Panc1 (cell line): ENCODE measurements at regions of chr2 and their contacts with region 1.

Region 1: DNA sequence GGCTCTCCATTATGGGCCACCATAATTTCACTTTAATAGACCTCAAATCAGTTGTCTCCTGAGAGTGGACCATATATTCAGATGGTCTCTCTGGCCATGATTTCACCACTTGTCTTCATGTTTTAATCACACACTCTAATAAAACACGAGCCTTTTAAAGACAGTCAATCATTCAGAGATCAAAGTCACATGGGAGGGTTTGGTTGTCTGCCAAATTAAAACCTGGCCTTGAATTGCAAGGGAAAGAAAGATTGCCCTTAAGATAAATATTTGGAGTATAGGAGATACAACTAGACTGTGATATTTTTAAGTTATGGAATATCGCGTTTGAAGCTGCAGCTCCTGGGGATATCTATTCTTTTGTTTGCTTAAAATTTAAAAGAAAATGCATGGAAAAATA is 377.8 kb upstream of the DDX18 start:
- DNase-seq: no peak
- ATAC-seq: no peak
- H3K4me3 ChIP-seq: no peak overlapping the region
- H3K27ac ChIP-seq: no peak overlapping the region
- H3K4me1 ChIP-seq: no peaks in the 10 kb centered on the region
- H3K27me3 ChIP-seq: no peaks in the 10 kb centered on the region
- CTCF ChIP-seq: no peak

Region 2: DNA sequence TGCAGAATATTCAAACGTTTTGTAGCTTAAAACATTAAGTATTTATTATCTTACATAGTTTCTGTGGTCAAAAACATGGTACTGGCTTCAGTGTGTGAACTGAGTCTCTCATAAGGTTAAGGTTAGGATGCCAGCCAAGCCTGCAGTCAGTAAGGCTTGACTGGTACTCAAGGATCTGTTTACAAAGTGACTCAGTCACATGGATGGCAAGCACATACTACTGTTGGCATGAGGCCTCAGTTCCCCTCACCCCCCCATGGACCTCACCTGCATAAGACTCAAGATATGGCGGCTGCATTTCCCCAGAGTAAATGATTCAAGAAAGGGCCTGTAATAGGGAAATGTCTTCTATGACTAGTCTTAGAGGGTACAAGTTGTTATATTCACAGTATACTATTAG is 1826.7 kb before region 1 on chr2:
- CTCF ChIA-PET with region 1: interaction called, 12 read pairs
- POLR2A ChIA-PET with region 1: no interaction called
- in situ Hi-C with region 1: no loop called
- intact Hi-C with region 1: no loop called
- DNase-seq: no peak
- ATAC-seq: no peak
- H3K4me3 ChIP-seq: no peak overlapping the region
- H3K27ac ChIP-seq: no peak overlapping the region
- H3K4me1 ChIP-seq: no peaks in the 10 kb centered on the region
- H3K27me3 ChIP-seq: no peaks in the 10 kb centered on the region
- CTCF ChIP-seq: no peak

Region 3: GRCh38 chr2:117118994-117119393 is 317.7 kb before region 1 on chr2:
- CTCF ChIA-PET with region 1: no interaction called
- POLR2A ChIA-PET with region 1: no interaction called
- in situ Hi-C with region 1: no loop called
- intact Hi-C with region 1: no loop called
- DNase-seq: no peak
- ATAC-seq: no peak
- H3K4me3 ChIP-seq: no peak overlapping the region
- H3K27ac ChIP-seq: no peak overlapping the region
- H3K4me1 ChIP-seq: no peaks in the 10 kb centered on the region
- H3K27me3 ChIP-seq: no peaks in the 10 kb centered on the region
- CTCF ChIP-seq: no peak